OCI-LY7 (cell line): ENCODE measurements at regions of chr16 and their contacts with region 1.

Region 1: GRCh38 chr16:69286941-69287713 is 24.0 kb upstream of the VPS4A start:
- DNase-seq: peak; percentile 71
- H3K4me3 ChIP-seq: no peak overlapping the region
- H3K27ac ChIP-seq: no peak overlapping the region
- H3K4me1 ChIP-seq: no peaks in the 10 kb centered on the region
- CTCF ChIP-seq: peak; percentile 80

Region 2: GRCh38 chr16:68617734-68618133 is 669.4 kb before region 1 on chr16:
- CTCF ChIA-PET with region 1: no interaction called
- POLR2A ChIA-PET with region 1: interaction called, 15 read pairs
- intact Hi-C with region 1: no loop called
- DNase-seq: no peak
- H3K4me3 ChIP-seq: no peak overlapping the region
- H3K27ac ChIP-seq: no peak overlapping the region
- H3K4me1 ChIP-seq: no peaks in the 10 kb centered on the region
- CTCF ChIP-seq: no peak

Region 3: DNA sequence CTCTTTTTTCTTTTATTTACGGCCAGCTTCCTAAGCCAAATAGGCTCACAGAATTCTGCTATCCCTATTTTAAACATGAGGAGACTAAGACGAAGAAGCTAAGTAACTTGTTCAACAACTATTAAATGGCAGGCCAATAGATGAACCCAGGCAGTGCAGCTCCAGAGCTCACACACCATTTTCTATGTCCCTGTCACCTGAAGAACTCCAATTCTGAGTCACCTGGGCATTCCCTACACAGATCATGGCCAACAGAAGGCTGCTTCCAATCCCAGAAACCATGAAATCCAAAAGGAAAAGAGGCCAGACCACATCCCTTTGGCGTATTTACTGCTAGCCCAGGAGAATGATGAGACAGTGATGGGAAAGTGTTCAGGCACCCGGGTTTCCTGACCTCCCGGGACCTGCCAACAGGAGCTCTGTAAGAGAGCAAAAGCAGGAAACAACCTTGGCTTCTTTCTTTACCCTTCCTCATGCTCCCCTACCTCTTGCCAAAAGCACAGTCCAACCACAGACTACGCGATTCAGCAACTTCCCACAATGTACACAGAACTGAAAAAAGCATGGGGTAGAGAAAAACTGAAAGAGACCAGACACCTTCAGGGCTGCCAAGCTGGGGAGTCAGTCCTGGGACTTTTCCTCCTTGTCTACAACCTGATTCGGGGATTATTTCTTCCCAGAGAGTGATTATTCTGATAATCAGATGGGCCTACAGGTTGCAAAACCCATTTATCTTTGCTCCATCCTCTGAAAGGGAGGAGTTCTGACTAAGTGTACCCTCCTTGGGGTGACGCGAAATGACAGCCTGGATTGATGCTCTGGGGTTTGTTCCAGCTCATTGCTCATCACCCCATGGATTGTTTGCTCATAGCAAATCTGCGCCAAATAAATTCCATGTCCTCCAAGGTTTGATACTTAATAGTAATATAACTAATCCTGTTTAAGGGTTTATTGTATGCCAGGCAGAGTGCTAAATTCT is 229.4 kb before region 1 on chr16:
- CTCF ChIA-PET with region 1: no interaction called
- POLR2A ChIA-PET with region 1: no interaction called
- intact Hi-C with region 1: no loop called
- DNase-seq: no peak
- H3K4me3 ChIP-seq: no peak overlapping the region
- H3K27ac ChIP-seq: no peak overlapping the region
- H3K4me1 ChIP-seq: no peaks in the 10 kb centered on the region
- CTCF ChIP-seq: no peak

Region 4: DNA sequence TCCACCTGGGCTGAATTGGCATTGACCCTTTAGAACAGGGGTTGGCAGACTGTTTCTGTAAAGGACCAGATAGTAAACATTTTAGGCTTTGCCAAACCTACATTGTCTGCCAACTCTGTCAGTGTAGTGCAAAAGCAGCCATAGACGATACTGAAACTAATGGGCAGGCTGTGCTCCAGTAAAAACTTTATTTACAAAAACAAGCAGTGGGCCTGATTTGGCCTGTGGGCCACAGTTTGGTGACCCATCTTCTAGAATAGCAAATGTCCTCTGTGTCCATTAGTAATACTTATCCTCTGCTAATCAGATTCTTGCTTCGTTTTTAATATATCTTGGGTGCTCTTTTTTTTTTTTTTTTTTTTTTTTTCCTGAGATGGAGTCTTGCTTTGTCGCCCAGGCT is 148.5 kb before region 1 on chr16:
- CTCF ChIA-PET with region 1: no interaction called
- POLR2A ChIA-PET with region 1: no interaction called
- intact Hi-C with region 1: no loop called
- DNase-seq: no peak
- H3K4me3 ChIP-seq: no peak overlapping the region
- H3K27ac ChIP-seq: no peak overlapping the region
- H3K4me1 ChIP-seq: peaks cover 11% of the 10 kb centered on the region
- CTCF ChIP-seq: no peak

Region 5: DNA sequence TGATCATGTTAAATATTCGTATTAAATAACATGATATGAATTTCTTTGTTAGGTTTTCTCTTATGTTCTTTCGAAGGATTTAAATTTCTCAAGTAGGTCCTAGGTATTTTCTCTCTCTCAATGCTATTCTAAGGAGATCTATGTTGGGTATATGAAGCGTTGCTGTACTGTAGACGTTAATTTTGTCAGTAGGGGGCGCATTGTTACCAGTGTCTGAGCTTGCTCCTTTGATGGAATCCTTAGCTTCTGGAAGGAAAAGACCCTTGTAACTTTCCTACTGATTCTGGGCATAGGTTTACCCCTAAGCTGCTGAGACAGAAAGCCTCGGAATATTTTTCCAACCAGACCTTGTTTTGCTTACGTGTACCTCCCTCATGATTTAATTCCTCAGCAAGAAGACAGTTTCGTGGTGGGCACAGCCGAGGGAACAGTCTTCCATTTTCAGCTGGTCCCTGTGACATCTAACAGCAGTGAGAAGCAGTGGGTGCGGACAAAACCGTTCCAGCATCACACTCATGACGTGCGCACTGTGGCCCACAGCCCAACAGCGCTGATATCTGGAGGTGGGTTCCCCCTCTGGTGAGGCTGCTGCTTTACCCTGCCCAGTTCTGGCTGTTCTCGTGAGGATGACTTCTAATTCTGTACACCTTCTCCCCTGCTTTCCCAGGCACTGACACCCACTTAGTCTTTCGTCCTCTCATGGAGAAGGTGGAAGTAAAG is 136.8 kb before region 1 on chr16:
- CTCF ChIA-PET with region 1: no interaction called
- POLR2A ChIA-PET with region 1: interaction called, 7 read pairs
- intact Hi-C with region 1: loop called (anchors 1 kb)
- DNase-seq: peak; percentile 74
- H3K4me3 ChIP-seq: no peak overlapping the region
- H3K27ac ChIP-seq: no peak overlapping the region
- H3K4me1 ChIP-seq: no peaks in the 10 kb centered on the region
- CTCF ChIP-seq: peak; percentile 92